ENCODE measurements at regions of chr22 and their contacts with region 1.

Region 1: GRCh38 chr22:31218565-31219262 is 6.6 kb downstream of the LIMK2 start:
- DNase-seq: no peak
- H3K4me3 ChIP-seq: no peak overlapping the region
- H3K27ac ChIP-seq: no peak overlapping the region
- H3K27me3 ChIP-seq: no peaks in the 10 kb centered on the region
- CTCF ChIP-seq: no peak

Region 2: GRCh38 chr22:31139866-31140716 is 78.6 kb before region 1 on chr22 and contains the start of gene PLA2G3:
- CTCF ChIA-PET with region 1: no interaction called
- POLR2A ChIA-PET with region 1: no interaction called
- DNase-seq: no peak
- H3K4me3 ChIP-seq: no peak within 1 kb of the TSS
- H3K27ac ChIP-seq: no peak within 1 kb of the TSS
- H3K27me3 ChIP-seq: peaks cover 27% of the 10 kb centered on the region
- CTCF ChIP-seq: peak; percentile 26; the same call in 1 of the 2 replicates
- polyA plus RNA-seq, gene PLA2G3: 0.10 and 0.11 TPM in 2 replicates

Region 3: DNA sequence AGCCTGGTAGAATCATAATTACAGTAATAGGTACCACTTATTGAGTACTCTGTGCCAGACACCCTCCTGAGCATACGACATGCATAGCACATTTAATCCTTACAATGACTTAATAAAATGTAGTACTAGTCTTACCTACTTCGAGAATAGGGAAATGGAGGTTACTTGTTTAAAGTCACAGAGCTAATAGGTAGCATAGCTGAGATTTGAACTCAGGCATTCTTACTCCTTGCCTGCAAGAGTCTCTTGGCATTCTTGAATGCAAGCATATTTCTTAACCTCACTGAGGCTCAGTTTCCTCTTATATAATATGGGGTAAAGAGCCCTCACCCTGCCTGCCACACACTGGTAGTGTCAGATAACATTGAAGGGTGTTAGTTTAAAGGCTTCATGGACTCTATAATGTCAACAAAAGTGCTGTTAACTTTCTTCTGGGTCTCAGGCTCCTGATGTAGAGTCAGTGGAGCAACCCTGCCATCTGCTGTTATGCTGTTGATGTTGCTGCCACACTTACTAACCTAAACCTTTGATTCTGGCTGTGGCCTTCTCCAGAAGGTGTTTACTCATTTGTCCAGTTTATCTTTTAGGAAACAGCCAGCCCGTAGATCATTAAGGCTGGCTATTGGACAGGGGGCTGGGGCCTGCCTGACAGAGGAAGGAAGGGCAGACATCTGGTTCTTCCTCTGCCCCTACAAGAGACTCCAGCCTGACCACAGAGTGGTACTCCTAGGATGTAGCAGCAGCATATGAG is 12.3 kb after region 1 on chr22:
- CTCF ChIA-PET with region 1: interaction called, 12 read pairs
- POLR2A ChIA-PET with region 1: no interaction called
- DNase-seq: peak; percentile 53
- H3K4me3 ChIP-seq: no peak overlapping the region
- H3K27ac ChIP-seq: no peak overlapping the region
- H3K27me3 ChIP-seq: no peaks in the 10 kb centered on the region
- CTCF ChIP-seq: peak; percentile 87